ENCODE measurements at regions of chr10 and their contacts with region 1.

Region 1: GRCh38 chr10:79195091-79195923 is 126.5 kb downstream of the ZMIZ1 start:
- DNase-seq: peak; percentile 61 to 80 (median 65)
- H3K4me3 ChIP-seq: no peak overlapping the region
- H3K4me3 Mint-ChIP-seq: no peak overlapping the region
- H3K27ac ChIP-seq: no peak overlapping the region
- H3K27ac Mint-ChIP-seq: peak overlapping the region in 2 of 8 donors; percentile 38 to 43
- H3K4me1 ChIP-seq: peaks cover 6% of the 10 kb centered on the region
- H3K4me1 Mint-ChIP-seq: peaks cover 0 to 9% (median 0%) of the 10 kb centered on the region in 3 donors
- H3K27me3 ChIP-seq: no peaks in the 10 kb centered on the region
- H3K27me3 Mint-ChIP-seq: no peaks in the 10 kb centered on the region

Region 2: GRCh38 chr10:78047314-78047891 is 1147.9 kb before region 1 on chr10:
- CTCF ChIA-PET with region 1: interaction called, 64 read pairs
- POLR2A ChIA-PET with region 1: no interaction called
- DNase-seq: peak; percentile 61 to 81 (median 69)
- H3K4me3 ChIP-seq: no peak overlapping the region
- H3K4me3 Mint-ChIP-seq: no peak overlapping the region
- H3K27ac ChIP-seq: no peak overlapping the region
- H3K27ac Mint-ChIP-seq: peak overlapping the region in 2 of 8 donors; percentile 27 to 62
- H3K4me1 ChIP-seq: peaks cover 4% of the 10 kb centered on the region
- H3K4me1 Mint-ChIP-seq: peaks cover 8 to 23% (median 19%) of the 10 kb centered on the region in 3 donors
- H3K27me3 ChIP-seq: no peaks in the 10 kb centered on the region
- H3K27me3 Mint-ChIP-seq: no peaks in the 10 kb centered on the region

Region 3: DNA sequence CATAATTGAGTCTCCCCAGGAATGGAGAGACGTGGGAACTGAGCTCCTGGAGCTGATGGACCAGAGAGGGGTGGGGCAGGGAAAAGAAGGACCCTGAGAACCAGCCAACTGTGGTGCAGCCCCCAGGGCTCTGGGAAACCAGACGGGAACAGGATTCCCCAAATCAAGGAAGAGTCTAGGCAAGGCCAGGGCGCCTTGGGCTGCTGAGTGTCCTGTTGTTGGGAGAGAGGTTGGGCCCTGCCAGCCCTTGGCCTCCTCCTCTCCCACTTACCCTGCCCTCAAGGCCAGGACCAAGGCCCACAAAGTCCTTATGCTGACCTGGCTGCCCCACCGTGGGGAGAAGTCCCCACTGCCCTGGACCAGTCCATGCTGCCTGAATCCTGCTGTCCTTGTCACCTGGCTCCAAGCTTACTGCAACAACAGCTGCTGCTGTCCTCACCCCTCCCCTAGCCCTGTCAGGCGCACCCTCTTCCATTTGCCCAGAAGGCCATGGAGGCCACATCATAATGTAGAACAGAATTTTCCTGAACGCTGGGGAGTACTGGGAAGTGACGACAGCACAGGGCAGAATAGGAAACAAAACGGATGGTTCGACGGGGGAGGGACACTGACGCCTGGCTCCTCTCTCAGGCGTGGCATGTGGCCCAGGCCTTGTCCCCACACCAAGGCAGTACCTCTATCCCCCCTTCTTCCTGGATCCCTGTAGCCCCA is 259.5 kb before region 1 on chr10:
- CTCF ChIA-PET with region 1: interaction called, 10 read pairs
- POLR2A ChIA-PET with region 1: no interaction called
- DNase-seq: no peak
- H3K4me3 ChIP-seq: no peak overlapping the region
- H3K4me3 Mint-ChIP-seq: no peak overlapping the region
- H3K27ac ChIP-seq: no peak overlapping the region
- H3K27ac Mint-ChIP-seq: no peak overlapping the region
- H3K4me1 ChIP-seq: peaks cover 6% of the 10 kb centered on the region
- H3K4me1 Mint-ChIP-seq: peaks cover 0 to 1% (median 0%) of the 10 kb centered on the region in 3 donors
- H3K27me3 ChIP-seq: no peaks in the 10 kb centered on the region
- H3K27me3 Mint-ChIP-seq: peaks cover 0 to 10% of the 10 kb centered on the region in 2 donors

Region 4: GRCh38 chr10:79106256-79107050 is 88.9 kb before region 1 on chr10:
- CTCF ChIA-PET with region 1: no interaction called
- POLR2A ChIA-PET with region 1: no interaction called
- DNase-seq: no peak
- H3K4me3 ChIP-seq: no peak overlapping the region
- H3K4me3 Mint-ChIP-seq: no peak overlapping the region
- H3K27ac ChIP-seq: no peak overlapping the region
- H3K27ac Mint-ChIP-seq: peak overlapping the region in 2 of 8 donors; percentile 27 to 36
- H3K4me1 ChIP-seq: peaks cover 20% of the 10 kb centered on the region
- H3K4me1 Mint-ChIP-seq: peaks cover 30 to 55% (median 33%) of the 10 kb centered on the region in 3 donors
- H3K27me3 ChIP-seq: no peaks in the 10 kb centered on the region
- H3K27me3 Mint-ChIP-seq: peaks cover 0 to 2% of the 10 kb centered on the region in 2 donors

Region 5: GRCh38 chr10:79149662-79150443 is 45.5 kb before region 1 on chr10:
- CTCF ChIA-PET with region 1: interaction called, 10 read pairs
- POLR2A ChIA-PET with region 1: no interaction called
- DNase-seq: peak; percentile 11 to 61 (median 21)
- H3K4me3 ChIP-seq: no peak overlapping the region
- H3K4me3 Mint-ChIP-seq: peak overlapping the region in 3 of 7 donors; percentile 44 to 47 (median 47)
- H3K27ac ChIP-seq: peak overlapping the region; percentile 80
- H3K27ac Mint-ChIP-seq: peak overlapping the region in 7 of 8 donors; percentile 26 to 84 (median 73)
- H3K4me1 ChIP-seq: peaks cover 57% of the 10 kb centered on the region
- H3K4me1 Mint-ChIP-seq: peaks cover 37 to 60% (median 40%) of the 10 kb centered on the region in 3 donors
- H3K27me3 ChIP-seq: no peaks in the 10 kb centered on the region
- H3K27me3 Mint-ChIP-seq: peaks cover 0 to 1% of the 10 kb centered on the region in 2 donors

Region 6: GRCh38 chr10:79170993-79171392 is 24.3 kb before region 1 on chr10:
- CTCF ChIA-PET with region 1: interaction called, 10 read pairs
- POLR2A ChIA-PET with region 1: no interaction called
- DNase-seq: no peak
- H3K4me3 ChIP-seq: no peak overlapping the region
- H3K4me3 Mint-ChIP-seq: no peak overlapping the region
- H3K27ac ChIP-seq: no peak overlapping the region
- H3K27ac Mint-ChIP-seq: no peak overlapping the region
- H3K4me1 ChIP-seq: no peaks in the 10 kb centered on the region
- H3K4me1 Mint-ChIP-seq: no peaks in the 10 kb centered on the region
- H3K27me3 ChIP-seq: no peaks in the 10 kb centered on the region
- H3K27me3 Mint-ChIP-seq: no peaks in the 10 kb centered on the region